ENCODE measurements at regions of chr5 and their contacts with region 1.

Region 1: DNA sequence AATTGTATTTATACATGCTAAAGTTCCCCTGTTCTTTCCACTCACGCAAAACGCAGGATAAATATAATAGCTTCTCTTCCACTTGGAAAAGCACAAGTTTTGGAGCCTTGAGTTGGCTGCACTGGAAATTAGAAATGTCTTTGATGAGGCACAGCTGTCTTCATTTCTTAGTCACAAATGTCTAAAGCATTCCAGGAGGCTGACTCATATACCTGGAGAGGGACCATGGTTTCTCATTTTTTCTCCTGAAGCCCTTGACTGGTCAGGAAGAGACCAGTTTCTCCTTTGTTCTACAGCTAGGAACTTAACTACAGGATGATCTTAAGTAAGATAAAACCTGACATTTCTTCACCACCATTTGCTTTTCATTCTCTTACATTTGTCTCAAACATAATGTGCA is 16.2 kb downstream of the MTX3 start:
- DNase-seq: peak; percentile 80
- H3K4me3 ChIP-seq: no peak overlapping the region
- H3K27ac ChIP-seq: peak overlapping the region; percentile 42
- H3K4me1 ChIP-seq: peaks cover 25% of the 10 kb centered on the region
- H3K27me3 ChIP-seq: no peaks in the 10 kb centered on the region
- CTCF ChIP-seq: no peak

Region 2: GRCh38 chr5:79474367-79475151 is 500.3 kb before region 1 on chr5:
- CTCF ChIA-PET with region 1: no interaction called
- dilution Hi-C with region 1: no loop called
- in situ Hi-C with region 1: no loop called
- intact Hi-C with region 1: no loop called
- DNase-seq: no peak
- H3K4me3 ChIP-seq: no peak overlapping the region
- H3K27ac ChIP-seq: no peak overlapping the region
- H3K4me1 ChIP-seq: no peaks in the 10 kb centered on the region
- H3K27me3 ChIP-seq: no peaks in the 10 kb centered on the region
- CTCF ChIP-seq: no peak

Region 3: GRCh38 chr5:79936002-79936645 is 38.8 kb before region 1 on chr5:
- CTCF ChIA-PET with region 1: no interaction called
- dilution Hi-C with region 1: no loop called
- in situ Hi-C with region 1: no loop called
- intact Hi-C with region 1: loop called (anchors 5 kb)
- DNase-seq: no peak
- H3K4me3 ChIP-seq: no peak overlapping the region
- H3K27ac ChIP-seq: no peak overlapping the region
- H3K4me1 ChIP-seq: peaks cover 47% of the 10 kb centered on the region
- H3K27me3 ChIP-seq: no peaks in the 10 kb centered on the region
- CTCF ChIP-seq: no peak

Region 4: DNA sequence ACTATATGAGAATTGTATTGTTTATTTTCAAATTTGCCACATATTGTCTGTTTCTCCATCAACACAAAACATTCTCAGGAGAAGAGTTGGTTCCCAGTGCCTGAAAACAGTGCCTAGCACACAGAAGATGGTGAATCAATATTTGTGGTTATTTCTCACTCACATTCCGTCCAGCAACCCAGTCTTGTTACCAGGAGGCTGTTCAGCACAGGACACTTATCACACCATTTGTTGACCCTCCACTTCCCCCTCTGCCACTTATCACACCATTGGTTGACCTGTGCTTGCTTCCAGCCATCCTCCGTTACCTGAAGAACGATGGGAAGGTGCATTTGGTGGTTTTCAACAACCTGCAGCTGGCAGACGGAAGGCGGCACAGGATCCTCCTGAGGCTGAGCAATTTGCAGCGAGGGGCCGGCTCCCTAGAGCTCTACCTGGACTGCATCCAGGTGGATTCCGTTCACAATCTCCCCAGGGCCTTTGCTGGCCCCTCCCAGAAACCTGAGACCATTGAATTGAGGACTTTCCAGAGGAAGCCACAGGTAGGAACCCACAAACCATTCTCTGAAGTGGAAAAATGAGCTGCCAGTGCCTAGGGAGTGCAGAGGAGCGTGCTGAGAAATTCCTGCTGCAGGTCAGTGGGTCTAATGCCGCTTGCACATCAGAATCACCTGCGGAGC is 80.7 kb after region 1 on chr5:
- CTCF ChIA-PET with region 1: interaction called, 17 read pairs
- dilution Hi-C with region 1: no loop called
- in situ Hi-C with region 1: no loop called
- intact Hi-C with region 1: no loop called
- DNase-seq: peak; percentile 90
- H3K4me3 ChIP-seq: peak overlapping the region in 1 of 3 experiments; percentile 38
- H3K27ac ChIP-seq: no peak overlapping the region
- H3K4me1 ChIP-seq: peaks cover 19% of the 10 kb centered on the region
- H3K27me3 ChIP-seq: no peaks in the 10 kb centered on the region
- CTCF ChIP-seq: no peak